Activated B cell treated with CpG ODN at 0.5 μM for 24 hours (primary cell): ENCODE measurements at regions of chr15 and their contacts with region 1.

Region 1: GRCh38 chr15:59299929-59300617 is 72.6 kb downstream of the MYO1E start:
- DNase-seq: peak; percentile 58
- ATAC-seq: peak; percentile 76
- H3K4me3 Mint-ChIP-seq: peak overlapping the region; percentile 71
- H3K27ac Mint-ChIP-seq: peak overlapping the region; percentile 94
- H3K4me1 Mint-ChIP-seq: peaks cover 93% of the 10 kb centered on the region
- H3K27me3 Mint-ChIP-seq: no peaks in the 10 kb centered on the region
- CTCF ChIP-seq: no peak

Region 2: DNA sequence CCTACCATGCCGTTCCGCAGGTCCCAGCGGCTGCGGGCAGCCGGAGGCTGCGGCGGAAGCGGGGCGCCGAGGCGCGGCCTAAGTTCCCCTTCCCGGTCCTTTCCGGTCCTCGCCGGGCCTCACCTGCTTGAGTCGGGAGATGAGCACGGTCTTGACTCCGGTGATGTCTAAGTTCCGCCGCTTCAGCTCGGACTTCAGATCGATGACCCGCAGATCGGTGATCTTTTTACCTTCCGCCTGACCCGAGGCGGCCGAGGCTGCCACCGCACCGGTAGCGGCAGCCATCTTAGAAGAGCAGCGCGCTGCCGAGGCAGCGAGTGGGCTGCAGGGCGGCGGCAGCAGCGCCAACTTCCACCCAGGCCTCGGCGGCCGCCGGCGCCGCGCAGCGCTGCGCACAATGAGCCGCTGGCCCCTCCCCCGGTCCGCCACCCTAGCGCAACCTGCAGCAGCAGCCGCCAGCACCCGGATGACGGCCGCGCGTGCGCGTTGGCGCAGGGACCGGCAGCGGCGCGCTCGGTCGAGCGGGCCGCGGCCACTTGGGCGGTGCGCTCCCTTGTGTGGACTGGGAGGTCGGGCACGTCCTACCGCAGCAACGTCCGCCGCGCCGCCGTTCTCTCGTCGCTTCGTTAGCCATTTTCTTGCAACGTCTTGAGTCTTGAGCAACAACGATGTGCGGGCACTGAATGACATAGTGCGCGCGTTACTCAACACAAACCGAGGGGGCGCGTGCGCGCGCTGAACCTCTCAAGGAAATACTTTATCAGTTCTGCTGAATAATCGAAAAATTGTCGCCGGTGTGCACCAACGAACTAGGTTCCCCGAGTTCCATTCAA is 366.6 kb before region 1 on chr15 and contains the start of gene SLTM:
- CTCF ChIA-PET with region 1: no interaction called
- POLR2A ChIA-PET with region 1: no interaction called
- intact Hi-C with region 1: loop called (anchors 1 kb)
- DNase-seq: peak; percentile 87
- ATAC-seq: peak; percentile 91
- H3K4me3 Mint-ChIP-seq: peak within 1 kb of the TSS; percentile 99
- H3K27ac Mint-ChIP-seq: peak within 1 kb of the TSS; percentile 100
- H3K4me1 Mint-ChIP-seq: peaks cover 29% of the 10 kb centered on the region
- H3K27me3 Mint-ChIP-seq: no peaks in the 10 kb centered on the region
- CTCF ChIP-seq: no peak
- total RNA-seq, gene SLTM: 124 and 159 TPM in 2 replicates

Region 3: GRCh38 chr15:59313641-59314332 is 13.7 kb after region 1 on chr15:
- CTCF ChIA-PET with region 1: no interaction called
- POLR2A ChIA-PET with region 1: interaction called, 3 read pairs
- intact Hi-C with region 1: loop called (anchors 1 kb)
- DNase-seq: no peak
- ATAC-seq: peak; percentile 37
- H3K4me3 Mint-ChIP-seq: no peak overlapping the region
- H3K27ac Mint-ChIP-seq: peak overlapping the region; percentile 24
- H3K4me1 Mint-ChIP-seq: peaks cover 77% of the 10 kb centered on the region
- H3K27me3 Mint-ChIP-seq: no peaks in the 10 kb centered on the region
- CTCF ChIP-seq: no peak

Region 4: DNA sequence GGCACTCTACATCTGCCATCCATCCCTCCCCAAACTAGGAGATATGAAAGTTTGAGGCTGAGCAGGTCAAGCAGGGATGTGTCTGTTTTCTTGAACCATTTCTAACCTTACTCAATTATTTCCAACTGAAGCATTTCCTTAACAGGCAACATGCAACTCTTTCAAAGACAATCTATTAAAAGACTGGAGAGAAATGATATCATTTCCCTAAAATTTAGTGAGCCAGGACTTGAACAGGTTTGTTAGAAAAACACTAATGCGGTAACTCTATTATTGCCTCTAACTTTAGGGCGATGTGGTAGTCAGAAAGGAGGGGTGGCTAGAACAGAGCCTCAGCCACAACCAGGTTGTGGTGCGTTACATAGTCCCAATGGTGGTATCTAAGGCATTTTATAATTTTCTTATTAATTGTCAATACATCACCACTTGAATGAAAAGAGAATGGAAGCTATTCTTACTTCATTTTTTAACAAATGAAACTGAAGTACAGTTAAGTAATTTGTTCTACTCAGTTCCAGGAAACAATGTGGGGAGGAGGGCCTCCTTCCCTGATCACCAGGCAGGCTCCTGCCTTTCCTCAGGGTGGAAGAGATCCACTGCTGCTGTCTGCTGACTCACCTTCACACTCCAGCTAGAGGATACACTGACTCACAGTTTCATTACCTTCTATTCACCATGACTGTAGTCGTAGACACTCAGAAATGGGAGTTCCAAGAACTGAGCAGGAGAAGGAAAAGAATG is 49.8 kb after region 1 on chr15:
- CTCF ChIA-PET with region 1: no interaction called
- POLR2A ChIA-PET with region 1: interaction called, 4 read pairs
- intact Hi-C with region 1: loop called (anchors 5 kb)
- DNase-seq: no peak
- ATAC-seq: peak; percentile 62
- H3K4me3 Mint-ChIP-seq: no peak overlapping the region
- H3K27ac Mint-ChIP-seq: peak overlapping the region; percentile 66
- H3K4me1 Mint-ChIP-seq: peaks cover 92% of the 10 kb centered on the region
- H3K27me3 Mint-ChIP-seq: no peaks in the 10 kb centered on the region
- CTCF ChIP-seq: no peak

Region 5: GRCh38 chr15:59399465-59400102 is 99.5 kb after region 1 on chr15:
- CTCF ChIA-PET with region 1: no interaction called
- POLR2A ChIA-PET with region 1: interaction called, 16 read pairs
- intact Hi-C with region 1: loop called (anchors 1 kb)
- DNase-seq: peak; percentile 46
- ATAC-seq: peak; percentile 92
- H3K4me3 Mint-ChIP-seq: peak overlapping the region; percentile 78
- H3K27ac Mint-ChIP-seq: peak overlapping the region; percentile 93
- H3K4me1 Mint-ChIP-seq: peaks cover 78% of the 10 kb centered on the region
- H3K27me3 Mint-ChIP-seq: no peaks in the 10 kb centered on the region
- CTCF ChIP-seq: no peak